Activated T-helper 1 cell treated with anti-CD3 and anti-CD28 coated beads, Interleukin-12 subunit alpha, Interleukin-12 subunit beta, Interleukin-2, Interleukin-4 antibody, amounts not matched to agents 30 ng/mL and 10 ng/mL and 1 ng/mL, durations not matched to agents 14 hours and 24 hours and 36 hours (primary cell): ENCODE measurements at regions of chr2 and their contacts with region 1.

Region 1: GRCh38 chr2:96816128-96816835 is at the start of gene CNNM3:
- DNase-seq: peak; percentile 97
- H3K4me3 Mint-ChIP-seq: peak within 1 kb of the TSS; percentile 93
- H3K27ac Mint-ChIP-seq: peak within 1 kb of the TSS; percentile 91
- H3K4me1 Mint-ChIP-seq: peaks cover 54% of the 10 kb centered on the region
- H3K27me3 Mint-ChIP-seq: no peaks in the 10 kb centered on the region
- total RNA-seq, gene CNNM3: 26.1 and 31.4 TPM in 2 replicates

Region 2: DNA sequence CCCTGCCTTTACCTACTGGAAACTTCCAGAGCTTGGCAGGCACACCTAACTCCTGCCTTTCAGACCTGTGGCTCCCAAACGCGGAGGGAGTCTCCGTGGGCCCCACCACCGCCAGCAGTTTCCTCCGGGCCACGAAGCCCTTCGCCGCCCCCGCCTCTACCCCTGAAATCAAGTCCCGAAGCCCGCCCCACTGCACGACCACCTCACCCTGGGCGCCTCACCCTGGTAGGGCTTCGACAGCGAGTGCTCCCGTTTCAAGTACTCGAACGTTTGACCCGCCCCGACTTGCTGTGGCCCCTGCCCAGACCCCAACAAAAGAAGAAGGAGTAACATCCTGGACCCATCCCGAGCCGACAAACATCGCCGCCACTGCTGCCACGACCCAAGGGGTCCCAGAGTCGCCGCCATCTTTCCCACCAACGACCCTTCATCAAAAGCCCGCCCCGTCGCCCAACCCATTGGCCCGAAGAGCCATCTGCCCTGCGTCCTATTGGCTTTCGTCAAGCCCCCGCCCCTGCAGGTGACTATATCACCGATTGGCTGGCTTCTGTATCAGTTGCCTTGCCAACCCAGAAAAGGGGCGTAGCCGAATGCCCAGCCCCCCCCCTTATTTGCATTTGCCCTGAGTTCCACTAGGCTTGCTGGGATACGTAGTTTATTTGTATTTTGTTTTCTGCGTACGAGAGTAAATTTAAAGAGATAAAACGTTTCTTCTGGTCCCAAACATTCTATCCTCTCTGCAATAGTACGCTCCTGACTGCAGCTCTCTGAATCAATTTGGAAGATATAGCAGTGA is 76.5 kb before region 1 on chr2 and contains the start of gene LMAN2L:
- intact Hi-C with region 1: loop called (anchors 1 kb)
- DNase-seq: peak; percentile 94
- H3K4me3 Mint-ChIP-seq: peak within 1 kb of the TSS; percentile 90
- H3K27ac Mint-ChIP-seq: peak within 1 kb of the TSS; percentile 77
- H3K4me1 Mint-ChIP-seq: peaks cover 32% of the 10 kb centered on the region
- H3K27me3 Mint-ChIP-seq: no peaks in the 10 kb centered on the region
- total RNA-seq, gene LMAN2L: 5.6 and 6.0 TPM in 2 replicates

Region 3: DNA sequence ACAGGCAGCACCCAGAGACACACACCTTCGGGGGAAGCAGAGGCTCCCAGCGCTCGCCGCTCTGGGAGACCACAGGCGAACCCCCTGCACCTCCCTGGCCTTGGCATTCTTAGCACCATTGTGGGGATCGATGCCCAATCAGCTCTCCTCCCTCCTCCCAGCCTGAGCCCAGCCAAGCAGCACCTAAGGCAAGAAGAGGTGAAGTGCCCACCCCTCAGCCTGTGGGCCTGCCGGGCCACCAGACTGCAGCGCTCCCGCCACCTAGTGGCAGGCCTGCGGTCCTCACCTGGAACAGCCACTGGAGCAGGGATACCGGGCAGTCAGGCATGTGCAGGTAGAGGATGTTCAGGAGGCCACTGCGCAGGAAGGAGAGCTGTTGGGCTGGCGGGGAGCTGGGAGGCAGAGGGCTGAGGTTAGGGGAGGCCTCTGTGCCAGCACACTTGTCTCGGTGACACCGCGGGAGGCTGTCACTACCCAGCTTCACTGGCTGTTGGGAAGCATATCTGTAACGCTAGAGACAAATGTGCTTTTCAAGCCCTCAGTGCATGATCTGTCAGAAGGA is 134.9 kb after region 1 on chr2:
- intact Hi-C with region 1: loop called (anchors 1 kb)
- DNase-seq: peak; percentile 68
- H3K4me3 Mint-ChIP-seq: no peak overlapping the region
- H3K27ac Mint-ChIP-seq: no peak overlapping the region
- H3K4me1 Mint-ChIP-seq: peaks cover 31% of the 10 kb centered on the region
- H3K27me3 Mint-ChIP-seq: peaks cover 6% of the 10 kb centered on the region

Region 4: DNA sequence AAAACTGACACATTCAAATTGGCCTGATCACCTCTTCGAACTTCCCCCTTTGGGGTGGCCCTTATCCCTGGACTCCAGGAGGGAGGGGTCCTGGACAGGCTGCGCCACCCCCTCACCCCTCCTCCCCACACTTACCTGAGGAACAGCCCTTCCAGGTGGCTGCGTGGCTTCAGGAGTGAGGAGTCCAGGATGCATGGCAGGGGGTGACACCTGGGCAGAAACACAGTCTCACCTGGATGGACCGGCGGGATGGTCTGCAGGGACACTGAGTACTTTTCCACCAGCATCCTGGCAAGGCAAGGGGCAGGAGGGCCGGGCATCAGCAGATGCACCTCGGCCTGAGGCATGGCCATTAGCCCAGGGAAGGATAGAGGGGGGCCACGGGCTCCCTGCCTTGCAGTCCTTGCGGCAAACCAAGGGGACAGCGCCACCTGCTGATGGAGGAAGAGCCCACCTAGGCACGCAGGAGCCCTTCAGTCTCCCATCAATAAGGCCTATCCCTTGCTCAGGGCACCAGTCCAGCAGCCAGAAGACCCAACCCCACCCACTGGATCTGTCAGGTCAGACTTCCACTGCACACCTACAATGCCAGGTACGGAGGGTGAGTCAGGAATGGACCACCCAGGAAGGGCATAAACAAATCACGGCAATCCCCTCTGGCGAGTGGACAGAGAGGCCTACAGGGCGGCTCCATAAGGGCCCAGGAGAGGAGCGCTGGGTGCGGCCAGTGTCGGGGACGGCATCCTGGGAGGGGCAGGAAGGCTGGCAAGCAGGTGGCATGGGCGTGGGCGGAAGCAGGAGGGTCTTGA is 144.1 kb after region 1 on chr2:
- intact Hi-C with region 1: loop called (anchors 1 kb)
- DNase-seq: peak; percentile 70
- H3K4me3 Mint-ChIP-seq: peak overlapping the region; percentile 47
- H3K27ac Mint-ChIP-seq: peak overlapping the region; percentile 67
- H3K4me1 Mint-ChIP-seq: peaks cover 55% of the 10 kb centered on the region
- H3K27me3 Mint-ChIP-seq: no peaks in the 10 kb centered on the region